WTC11 (cell line): ENCODE measurements at regions of chr1 and their contacts with region 1.

Region 1: DNA sequence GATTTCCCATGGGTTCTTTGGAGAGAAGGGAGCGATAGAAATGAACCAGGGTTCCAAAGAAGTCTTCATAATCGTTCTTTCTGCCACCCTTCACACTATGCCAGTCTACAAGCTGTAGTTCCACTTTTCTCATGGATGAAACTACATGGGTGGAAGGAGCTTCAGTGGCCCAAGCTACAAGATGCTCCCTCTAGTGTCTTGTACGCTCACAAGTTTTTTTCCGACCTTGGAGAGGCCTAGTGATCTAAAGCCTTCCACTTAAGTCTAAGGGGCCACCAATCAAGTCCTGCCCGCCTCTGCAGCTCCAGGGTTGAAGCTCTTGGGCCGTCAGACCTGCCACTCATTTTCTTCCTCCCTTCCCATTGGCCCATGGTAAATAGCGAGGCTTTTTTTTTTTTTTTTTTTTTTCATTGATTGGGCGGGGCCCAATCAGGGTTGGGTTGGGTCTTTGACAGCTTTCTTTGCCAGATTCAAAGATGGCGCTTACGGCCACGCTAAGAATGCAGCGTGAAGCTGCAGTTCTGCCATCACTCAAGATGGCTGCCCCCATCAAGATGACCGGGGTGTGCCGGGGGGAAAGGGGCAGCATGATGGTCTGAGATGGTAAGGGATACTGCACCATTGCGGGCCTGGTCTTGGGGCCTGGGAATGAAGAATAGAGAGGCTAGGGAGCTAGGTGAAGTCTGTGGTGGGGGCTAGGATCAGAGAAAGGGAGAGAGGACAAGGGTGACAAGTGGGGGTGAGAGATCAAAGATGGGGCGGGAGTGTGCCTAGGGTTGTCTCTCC is at the start of gene TOMM40L:
- DNase-seq: peak; percentile 88
- ATAC-seq: peak; percentile 94
- H3K4me3 Mint-ChIP-seq: peak within 1 kb of the TSS; percentile 100
- H3K27ac Mint-ChIP-seq: peak within 1 kb of the TSS; percentile 98
- H3K4me1 Mint-ChIP-seq: peaks cover 28% of the 10 kb centered on the region
- H3K27me3 Mint-ChIP-seq: no peaks in the 10 kb centered on the region
- CTCF ChIP-seq: no peak
- total RNA-seq, gene TOMM40L: 13.0 to 16.9 TPM (median 15.1 TPM) in 3 replicates

Region 2: DNA sequence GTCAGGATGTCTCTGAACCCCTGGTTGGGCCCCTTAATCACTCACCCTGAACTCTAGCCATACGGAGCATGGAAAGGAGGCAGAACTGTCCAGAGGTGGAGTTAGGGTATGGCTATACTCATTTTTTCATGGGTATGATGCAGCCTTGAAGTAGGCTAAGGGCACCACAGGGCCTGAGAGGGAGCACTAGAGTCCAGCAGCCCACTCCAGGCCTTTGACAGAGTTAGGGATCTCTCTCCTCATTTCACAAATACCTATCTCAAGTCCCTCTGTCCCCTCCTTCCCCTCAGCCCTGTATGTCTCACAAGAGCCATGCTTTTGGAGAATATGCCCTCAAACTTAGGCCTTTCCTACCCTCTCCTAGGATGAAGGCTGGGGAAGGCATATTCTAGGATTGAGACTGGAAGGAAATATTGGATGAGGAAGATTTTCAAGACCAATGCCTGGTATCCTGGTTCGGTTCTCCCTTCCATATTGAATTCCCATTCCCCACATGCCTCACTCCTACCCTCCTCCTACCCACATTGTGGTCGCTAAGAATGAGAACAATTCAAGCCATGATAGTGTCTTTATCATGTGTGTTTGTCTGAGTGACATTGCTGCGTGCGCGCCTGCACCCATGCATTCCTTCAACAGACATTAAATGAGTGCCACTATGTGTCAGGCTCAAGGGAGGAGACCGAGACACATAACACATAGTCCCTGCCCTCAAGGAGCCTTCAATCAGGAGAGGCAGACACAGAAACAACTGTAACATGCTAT is 133.8 kb before region 1 on chr1:
- CTCF ChIA-PET with region 1: no interaction called
- POLR2A ChIA-PET with region 1: no interaction called
- DNase-seq: no peak
- ATAC-seq: no peak
- H3K4me3 Mint-ChIP-seq: no peak overlapping the region
- H3K27ac Mint-ChIP-seq: no peak overlapping the region
- H3K4me1 Mint-ChIP-seq: peaks cover 4% of the 10 kb centered on the region
- H3K27me3 Mint-ChIP-seq: peaks cover 6% of the 10 kb centered on the region; the same call in 1 of the 2 replicates
- CTCF ChIP-seq: no peak

Region 3: DNA sequence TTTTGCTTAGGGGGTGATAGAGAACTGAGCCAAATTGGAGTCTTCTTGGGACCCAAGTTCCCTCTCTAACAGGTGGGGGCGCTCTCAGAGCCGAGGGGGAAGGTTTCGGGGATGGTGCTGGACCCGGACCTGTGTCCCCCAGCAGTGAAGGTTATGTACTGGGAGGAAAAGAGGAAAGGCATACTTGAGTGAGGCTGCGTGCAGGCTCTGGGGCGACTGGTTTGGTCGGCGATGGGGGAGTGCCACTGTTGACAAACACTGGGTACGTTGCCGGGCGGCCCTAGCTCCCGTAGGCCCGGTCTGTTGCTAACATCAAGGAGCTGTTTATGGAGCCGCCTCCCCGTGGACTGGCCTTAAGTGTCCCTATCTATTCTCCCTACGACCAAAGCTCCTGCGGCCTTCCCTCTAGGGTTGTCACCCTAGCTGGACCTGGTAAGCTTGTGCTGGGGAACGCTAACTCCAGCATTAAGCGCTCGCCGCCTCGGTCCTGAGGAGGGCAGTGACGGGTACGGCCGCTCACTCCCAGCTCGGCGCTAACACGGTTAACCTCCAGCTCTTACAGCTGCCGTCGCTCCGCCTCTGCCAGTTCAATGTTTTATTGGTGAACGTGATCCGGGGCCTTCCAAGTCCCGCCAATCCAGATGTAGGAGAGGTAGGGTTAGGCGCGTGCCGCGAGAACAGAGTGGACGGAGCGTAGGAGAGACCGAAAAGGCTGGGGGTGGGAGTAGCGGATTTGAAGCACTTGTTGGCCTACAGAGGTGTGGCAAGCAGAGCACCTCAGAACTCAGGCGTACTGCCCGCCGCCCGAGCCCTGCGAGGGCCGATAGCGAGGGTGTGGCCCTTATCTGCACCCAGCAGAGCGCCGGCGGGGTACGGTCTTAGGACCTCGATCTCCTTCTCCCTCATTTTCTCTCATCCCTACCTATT is 59.7 kb before region 1 on chr1 and contains the start of gene PPOX:
- CTCF ChIA-PET with region 1: interaction called, 13 read pairs
- POLR2A ChIA-PET with region 1: interaction called, 4 read pairs
- DNase-seq: peak; percentile 94
- ATAC-seq: peak; percentile 95
- H3K4me3 Mint-ChIP-seq: peak within 1 kb of the TSS; percentile 79
- H3K27ac Mint-ChIP-seq: peak within 1 kb of the TSS; percentile 13
- H3K4me1 Mint-ChIP-seq: peaks cover 8% of the 10 kb centered on the region
- H3K27me3 Mint-ChIP-seq: no peaks in the 10 kb centered on the region
- CTCF ChIP-seq: peak; percentile 28; the same call in 1 of the 2 replicates
- total RNA-seq, gene PPOX: 39.8 to 44.8 TPM (median 43.4 TPM) in 3 replicates

Region 4: DNA sequence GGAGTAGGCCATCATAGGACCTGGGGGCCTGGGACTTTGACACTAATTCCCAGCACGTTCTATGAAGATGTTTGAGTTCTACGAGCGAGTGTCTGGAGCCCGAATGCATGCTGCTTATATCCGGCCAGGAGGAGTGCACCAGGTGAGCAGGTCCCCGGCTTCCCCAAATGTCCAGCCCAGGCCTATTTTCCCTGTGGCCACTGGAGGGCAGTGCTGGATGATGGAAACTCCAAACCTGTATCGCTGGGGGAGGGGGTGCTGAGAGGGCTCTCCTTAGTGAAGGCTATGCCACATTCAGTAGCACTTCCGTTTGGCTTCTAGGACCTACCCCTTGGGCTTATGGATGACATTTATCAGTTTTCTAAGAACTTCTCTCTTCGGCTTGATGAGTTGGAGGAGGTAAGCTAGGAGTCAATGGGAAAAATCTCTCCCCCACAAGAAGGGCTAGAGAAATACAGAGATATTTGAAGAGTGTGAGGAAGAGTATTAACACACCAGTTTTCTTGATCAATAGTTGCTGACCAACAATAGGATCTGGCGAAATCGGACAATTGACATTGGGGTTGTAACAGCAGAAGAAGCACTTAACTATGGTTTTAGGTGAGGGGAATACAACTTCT is 15.8 kb before region 1 on chr1:
- CTCF ChIA-PET with region 1: interaction called, 29 read pairs
- POLR2A ChIA-PET with region 1: interaction called, 5 read pairs
- DNase-seq: peak; percentile 91
- ATAC-seq: peak; percentile 98
- H3K4me3 Mint-ChIP-seq: no peak overlapping the region
- H3K27ac Mint-ChIP-seq: peak overlapping the region; percentile 93
- H3K4me1 Mint-ChIP-seq: peaks cover 6% of the 10 kb centered on the region
- H3K27me3 Mint-ChIP-seq: no peaks in the 10 kb centered on the region; the same call in 1 of the 2 replicates
- CTCF ChIP-seq: peak; percentile 81

Region 5: DNA sequence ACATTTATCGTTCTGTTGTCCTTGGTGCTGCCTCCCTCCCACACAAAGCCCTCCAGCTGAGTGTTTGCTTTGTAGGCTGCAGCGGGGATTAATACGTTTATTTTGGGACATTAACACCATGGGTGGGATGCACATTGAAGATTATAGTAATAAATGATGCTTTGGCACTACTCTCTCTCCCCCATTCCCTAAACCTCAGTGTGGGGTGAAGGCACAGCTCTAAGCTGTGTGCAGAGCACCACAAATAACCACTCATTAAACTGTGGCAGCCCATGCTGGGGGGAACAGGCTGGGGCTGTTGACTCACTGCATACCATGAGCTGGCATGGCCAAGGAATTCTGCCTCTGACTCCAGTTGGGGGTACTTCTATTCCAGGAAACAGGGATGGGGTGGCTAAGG is 40.5 kb after region 1 on chr1:
- CTCF ChIA-PET with region 1: interaction called, 18 read pairs
- POLR2A ChIA-PET with region 1: interaction called, 3 read pairs
- DNase-seq: no peak
- ATAC-seq: no peak; the same call in 1 of the 2 replicates
- H3K4me3 Mint-ChIP-seq: no peak overlapping the region
- H3K27ac Mint-ChIP-seq: no peak overlapping the region
- H3K4me1 Mint-ChIP-seq: peaks cover 15% of the 10 kb centered on the region
- H3K27me3 Mint-ChIP-seq: peaks cover 22% of the 10 kb centered on the region
- CTCF ChIP-seq: no peak

Region 6: GRCh38 chr1:161314201-161314981 is 88.7 kb after region 1 on chr1 and contains the start of gene SDHC:
- CTCF ChIA-PET with region 1: interaction called, 16 read pairs
- POLR2A ChIA-PET with region 1: no interaction called
- DNase-seq: peak; percentile 91
- ATAC-seq: peak; percentile 91
- H3K4me3 Mint-ChIP-seq: peak within 1 kb of the TSS; percentile 99
- H3K27ac Mint-ChIP-seq: peak within 1 kb of the TSS; percentile 99
- H3K4me1 Mint-ChIP-seq: peaks cover 29% of the 10 kb centered on the region
- H3K27me3 Mint-ChIP-seq: no peaks in the 10 kb centered on the region; the same call in 1 of the 2 replicates
- CTCF ChIP-seq: no peak
- total RNA-seq, gene SDHC: 193 to 207 TPM (median 196 TPM) in 3 replicates

Region 7: GRCh38 chr1:161389691-161390558 is 164.2 kb after region 1 on chr1:
- CTCF ChIA-PET with region 1: interaction called, 15 read pairs
- POLR2A ChIA-PET with region 1: interaction called, 7 read pairs
- DNase-seq: peak; percentile 91
- ATAC-seq: peak; percentile 85
- H3K4me3 Mint-ChIP-seq: peak overlapping the region; percentile 92
- H3K27ac Mint-ChIP-seq: peak overlapping the region; percentile 95
- H3K4me1 Mint-ChIP-seq: peaks cover 17% of the 10 kb centered on the region
- H3K27me3 Mint-ChIP-seq: peaks cover 15% of the 10 kb centered on the region; the same call in 1 of the 2 replicates
- CTCF ChIP-seq: no peak